AG04449 (cell line): ENCODE measurements at regions of chr22 and their contacts with region 1.

Region 1: DNA sequence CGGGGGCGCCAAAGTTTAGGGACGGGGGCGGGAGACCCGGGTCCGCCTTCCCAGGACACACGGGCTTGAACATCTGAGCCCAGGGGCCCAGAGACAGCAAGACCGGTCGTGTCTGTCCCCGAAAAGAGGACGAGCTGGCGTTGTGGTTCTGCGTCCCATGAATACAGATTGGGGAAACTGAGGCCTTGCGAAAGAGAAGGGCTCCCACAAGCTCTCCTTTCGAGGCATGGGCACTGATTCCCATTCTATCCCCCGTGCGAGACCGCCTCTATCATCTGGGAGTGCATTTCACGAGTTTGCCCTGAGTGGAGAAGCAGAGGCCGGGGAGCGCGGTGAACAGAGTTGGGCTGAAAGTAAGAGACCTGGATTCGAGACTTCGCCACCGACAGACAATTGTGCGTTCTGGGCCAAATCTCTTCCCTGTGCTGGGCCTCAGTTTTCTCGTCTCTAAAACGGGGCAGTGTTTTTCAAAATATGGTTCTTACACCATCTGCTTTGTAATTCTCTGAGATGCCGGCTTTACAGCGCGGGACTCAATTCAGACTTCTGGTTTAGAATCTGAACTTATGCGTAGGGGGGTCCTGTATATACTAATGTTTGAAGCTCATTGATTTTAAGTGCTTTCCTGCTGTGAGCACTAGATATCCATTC is 471 bp downstream of the RNF185 start:
- DNase-seq: no peak
- H3K4me3 ChIP-seq: peak overlapping the region; percentile 93
- CTCF ChIP-seq: no peak

Region 2: GRCh38 chr22:31118046-31118820 is 42.2 kb before region 1 on chr22:
- CTCF ChIA-PET with region 1: no interaction called
- POLR2A ChIA-PET with region 1: no interaction called
- DNase-seq: no peak
- H3K4me3 ChIP-seq: no peak overlapping the region
- CTCF ChIP-seq: no peak

Region 3: GRCh38 chr22:31173386-31174145 is 13.1 kb after region 1 on chr22:
- CTCF ChIA-PET with region 1: interaction called, 11 read pairs
- POLR2A ChIA-PET with region 1: interaction called, 4 read pairs
- DNase-seq: peak; percentile 57
- H3K4me3 ChIP-seq: no peak overlapping the region
- CTCF ChIP-seq: no peak